Caco-2 (cell line): ENCODE measurements at regions of chr16 and their contacts with region 1.

Region 1: GRCh38 chr16:25111403-25112166 is at the start of gene LCMT1:
- DNase-seq: peak; percentile 93 to 94
- H3K4me3 ChIP-seq: peak within 1 kb of the TSS; percentile 99
- H3K4me3 Mint-ChIP-seq: peak within 1 kb of the TSS; percentile 91
- H3K27ac Mint-ChIP-seq: peak within 1 kb of the TSS; percentile 81
- H3K4me1 ChIP-seq: no peaks in the 10 kb centered on the region
- H3K4me1 Mint-ChIP-seq: peaks cover 7% of the 10 kb centered on the region
- H3K27me3 ChIP-seq: no peaks in the 10 kb centered on the region
- H3K27me3 Mint-ChIP-seq: no peaks in the 10 kb centered on the region
- CTCF ChIP-seq: no peak
- total RNA-seq, gene LCMT1: 50.8 and 53.9 TPM in 2 replicates

Region 2: GRCh38 chr16:24139282-24139681 is 972.3 kb before region 1 on chr16:
- CTCF ChIA-PET with region 1: no interaction called
- POLR2A ChIA-PET with region 1: no interaction called
- intact Hi-C with region 1: no loop called
- DNase-seq: no peak
- H3K4me3 ChIP-seq: no peak overlapping the region
- H3K4me3 Mint-ChIP-seq: no peak overlapping the region
- H3K27ac Mint-ChIP-seq: no peak overlapping the region
- H3K4me1 ChIP-seq: no peaks in the 10 kb centered on the region
- H3K4me1 Mint-ChIP-seq: no peaks in the 10 kb centered on the region
- H3K27me3 ChIP-seq: no peaks in the 10 kb centered on the region
- H3K27me3 Mint-ChIP-seq: peaks cover 8% of the 10 kb centered on the region
- CTCF ChIP-seq: no peak

Region 3: GRCh38 chr16:24834459-24835335 is 276.9 kb before region 1 on chr16:
- CTCF ChIA-PET with region 1: interaction called, 5 read pairs
- POLR2A ChIA-PET with region 1: no interaction called
- intact Hi-C with region 1: loop called (anchors 2 kb)
- DNase-seq: peak; percentile 56 to 58
- H3K4me3 ChIP-seq: no peak overlapping the region
- H3K4me3 Mint-ChIP-seq: no peak overlapping the region
- H3K27ac Mint-ChIP-seq: no peak overlapping the region
- H3K4me1 ChIP-seq: peaks cover 23% of the 10 kb centered on the region
- H3K4me1 Mint-ChIP-seq: peaks cover 7% of the 10 kb centered on the region
- H3K27me3 ChIP-seq: no peaks in the 10 kb centered on the region
- H3K27me3 Mint-ChIP-seq: no peaks in the 10 kb centered on the region
- CTCF ChIP-seq: peak; percentile 47 to 79

Region 4: GRCh38 chr16:24988593-24989338 is 122.8 kb before region 1 on chr16:
- CTCF ChIA-PET with region 1: interaction called, 3 read pairs
- POLR2A ChIA-PET with region 1: no interaction called
- intact Hi-C with region 1: loop called (anchors 5 kb)
- DNase-seq: peak; percentile 87 to 91
- H3K4me3 ChIP-seq: no peak overlapping the region
- H3K4me3 Mint-ChIP-seq: peak overlapping the region; percentile 49
- H3K27ac Mint-ChIP-seq: peak overlapping the region; percentile 86
- H3K4me1 ChIP-seq: peaks cover 67% of the 10 kb centered on the region
- H3K4me1 Mint-ChIP-seq: peaks cover 51% of the 10 kb centered on the region
- H3K27me3 ChIP-seq: no peaks in the 10 kb centered on the region
- H3K27me3 Mint-ChIP-seq: no peaks in the 10 kb centered on the region
- CTCF ChIP-seq: no peak

Region 5: GRCh38 chr16:25014500-25015147 is 97.0 kb before region 1 on chr16:
- CTCF ChIA-PET with region 1: interaction called, 3 read pairs
- POLR2A ChIA-PET with region 1: interaction called, 10 read pairs
- intact Hi-C with region 1: no loop called
- DNase-seq: peak in 1 of 2 experiments; percentile 43
- H3K4me3 ChIP-seq: peak overlapping the region; percentile 96
- H3K4me3 Mint-ChIP-seq: peak overlapping the region; percentile 85
- H3K27ac Mint-ChIP-seq: peak overlapping the region; percentile 86
- H3K4me1 ChIP-seq: peaks cover 39% of the 10 kb centered on the region
- H3K4me1 Mint-ChIP-seq: peaks cover 37% of the 10 kb centered on the region
- H3K27me3 ChIP-seq: no peaks in the 10 kb centered on the region
- H3K27me3 Mint-ChIP-seq: no peaks in the 10 kb centered on the region
- CTCF ChIP-seq: no peak

Region 6: DNA sequence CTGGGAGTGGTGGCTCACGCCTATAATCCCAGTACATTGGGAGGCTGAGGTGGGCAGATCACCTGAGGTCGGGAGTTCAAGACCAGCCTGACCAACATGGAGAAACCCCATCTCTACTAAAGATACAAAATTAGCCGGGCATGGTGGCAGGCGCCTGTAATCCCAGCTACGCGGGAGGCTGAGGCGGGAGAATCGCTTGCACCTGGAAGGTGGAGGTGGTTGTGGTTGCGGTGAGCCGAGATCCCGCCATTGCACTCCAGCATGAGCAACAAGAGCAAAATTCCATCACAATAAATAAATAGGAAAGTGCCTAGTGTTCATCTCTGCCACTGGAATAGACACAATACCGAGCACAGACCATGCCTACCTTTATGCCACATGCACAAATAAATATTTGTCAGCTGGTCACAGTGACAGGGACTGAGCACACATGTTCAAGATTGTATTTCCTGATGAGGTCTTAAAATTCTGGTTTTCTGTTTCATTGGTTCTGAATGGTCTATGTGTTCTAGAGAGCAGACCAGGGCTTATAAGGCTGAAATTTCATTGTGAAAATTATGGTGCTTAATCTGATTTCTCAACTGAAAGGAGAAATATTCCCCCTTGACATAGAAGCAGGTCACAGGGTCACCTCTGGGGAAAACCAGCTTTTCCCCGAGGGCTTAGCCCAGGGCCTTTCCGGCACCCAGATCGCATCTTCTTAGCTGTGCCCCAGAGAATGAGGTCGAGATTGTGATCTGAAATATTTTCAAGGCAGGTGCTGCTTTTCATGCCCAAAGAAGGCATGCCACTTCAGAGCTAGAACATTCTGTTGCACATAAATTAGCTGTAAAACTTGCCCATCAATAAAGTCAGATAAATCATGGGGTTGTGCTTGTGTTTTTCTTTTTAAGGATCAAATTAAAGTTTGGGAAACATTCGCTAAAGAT is 71.3 kb before region 1 on chr16:
- CTCF ChIA-PET with region 1: no interaction called
- POLR2A ChIA-PET with region 1: no interaction called
- intact Hi-C with region 1: no loop called
- DNase-seq: no peak
- H3K4me3 ChIP-seq: no peak overlapping the region
- H3K4me3 Mint-ChIP-seq: no peak overlapping the region
- H3K27ac Mint-ChIP-seq: no peak overlapping the region
- H3K4me1 ChIP-seq: peaks cover 17% of the 10 kb centered on the region
- H3K4me1 Mint-ChIP-seq: peaks cover 29% of the 10 kb centered on the region
- H3K27me3 ChIP-seq: no peaks in the 10 kb centered on the region
- H3K27me3 Mint-ChIP-seq: no peaks in the 10 kb centered on the region
- CTCF ChIP-seq: no peak

Region 7: DNA sequence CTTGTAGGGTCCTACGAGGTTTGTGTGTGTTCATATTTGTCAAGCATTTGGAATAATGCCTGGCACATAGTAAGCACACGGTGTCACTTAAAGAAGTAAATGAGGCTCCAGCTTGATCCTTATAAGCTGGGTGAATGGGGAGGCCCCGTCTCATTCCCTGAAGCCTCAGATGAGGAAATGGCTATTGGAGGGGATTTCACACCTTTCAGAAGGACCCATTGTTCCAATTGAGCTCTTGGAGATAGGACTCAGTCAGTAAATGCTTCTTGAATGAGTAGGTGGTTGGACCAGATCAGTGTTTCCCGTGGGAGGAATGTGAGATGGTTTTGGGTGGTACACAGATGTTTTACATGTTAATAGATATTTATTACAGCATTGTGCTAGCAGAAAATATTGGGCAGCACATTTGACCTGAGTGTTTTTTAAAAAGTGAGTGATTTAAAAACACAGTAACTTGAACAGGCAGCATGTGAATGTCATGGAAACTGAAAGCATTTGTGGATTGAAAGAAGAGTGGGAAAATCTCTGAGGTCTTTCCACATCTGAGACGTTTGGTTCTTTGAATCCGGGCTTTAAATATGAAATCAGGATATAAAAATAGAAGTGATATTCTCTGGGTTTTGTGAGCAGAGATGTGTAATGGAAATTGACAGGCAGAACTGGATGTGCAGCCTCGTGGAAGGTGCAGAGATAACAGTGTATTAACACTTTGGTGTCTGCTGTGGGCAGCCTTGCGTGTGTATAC is 60.0 kb before region 1 on chr16:
- CTCF ChIA-PET with region 1: interaction called, 5 read pairs
- POLR2A ChIA-PET with region 1: interaction called, 5 read pairs
- intact Hi-C with region 1: loop called (anchors 1 kb)
- DNase-seq: no peak
- H3K4me3 ChIP-seq: no peak overlapping the region
- H3K4me3 Mint-ChIP-seq: peak overlapping the region; percentile 52
- H3K27ac Mint-ChIP-seq: peak overlapping the region; percentile 43
- H3K4me1 ChIP-seq: peaks cover 33% of the 10 kb centered on the region
- H3K4me1 Mint-ChIP-seq: peaks cover 20% of the 10 kb centered on the region
- H3K27me3 ChIP-seq: no peaks in the 10 kb centered on the region
- H3K27me3 Mint-ChIP-seq: no peaks in the 10 kb centered on the region
- CTCF ChIP-seq: no peak

Region 8: DNA sequence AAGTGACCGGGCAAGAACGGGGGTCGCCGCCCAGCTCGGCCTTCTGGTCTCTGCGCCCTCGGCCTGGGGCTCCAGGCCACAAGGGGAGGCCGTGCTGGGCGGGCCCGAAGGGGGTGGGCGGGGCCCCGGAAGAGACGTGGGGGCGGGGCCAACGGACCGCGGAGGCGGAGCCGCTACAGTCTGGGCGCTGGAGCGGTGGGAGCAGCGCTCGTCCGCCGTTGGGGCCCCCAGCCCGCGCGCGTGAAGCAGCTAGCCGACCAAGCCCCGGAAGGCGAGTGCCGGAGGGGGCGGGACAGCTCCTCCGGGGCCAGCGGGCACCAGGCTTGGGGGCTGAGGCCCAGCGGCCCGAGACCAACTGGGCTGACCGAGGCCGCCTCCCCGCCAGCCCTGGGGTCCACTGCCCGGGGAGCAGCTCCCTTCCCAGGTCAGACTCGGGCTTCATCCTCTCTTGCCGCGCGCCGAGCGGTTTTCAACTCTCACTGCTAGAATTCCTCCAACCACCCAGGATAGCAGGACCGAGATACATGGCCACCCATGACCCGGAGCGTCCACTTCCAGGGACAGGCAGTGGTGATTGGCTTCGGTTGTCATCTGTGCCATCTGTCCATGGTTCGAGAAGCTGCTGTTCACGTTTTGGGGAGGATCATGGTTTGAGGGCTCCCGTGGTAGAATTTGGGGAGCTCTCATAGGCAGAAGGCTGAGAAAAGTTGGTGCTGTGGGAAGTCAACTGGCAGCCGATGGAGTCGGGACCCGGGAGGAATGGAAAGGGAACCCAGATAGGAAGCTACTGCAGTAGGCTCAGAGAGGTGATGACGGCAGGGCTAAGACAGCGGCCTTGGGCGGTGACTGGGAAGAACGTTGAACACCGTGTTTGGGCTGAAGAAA is 44.6 kb before region 1 on chr16:
- CTCF ChIA-PET with region 1: interaction called, 12 read pairs
- POLR2A ChIA-PET with region 1: interaction called, 13 read pairs
- intact Hi-C with region 1: loop called (anchors 1 kb)
- DNase-seq: peak; percentile 80 to 86
- H3K4me3 ChIP-seq: peak overlapping the region; percentile 54
- H3K4me3 Mint-ChIP-seq: peak overlapping the region; percentile 96
- H3K27ac Mint-ChIP-seq: peak overlapping the region; percentile 91
- H3K4me1 ChIP-seq: peaks cover 24% of the 10 kb centered on the region
- H3K4me1 Mint-ChIP-seq: peaks cover 18% of the 10 kb centered on the region
- H3K27me3 ChIP-seq: no peaks in the 10 kb centered on the region
- H3K27me3 Mint-ChIP-seq: no peaks in the 10 kb centered on the region
- CTCF ChIP-seq: no peak

Region 9: GRCh38 chr16:25089351-25089750 is 22.2 kb before region 1 on chr16:
- CTCF ChIA-PET with region 1: interaction called, 8 read pairs
- POLR2A ChIA-PET with region 1: interaction called, 13 read pairs
- intact Hi-C with region 1: no loop called
- DNase-seq: peak; percentile 74 to 81
- H3K4me3 ChIP-seq: no peak overlapping the region
- H3K4me3 Mint-ChIP-seq: peak overlapping the region; percentile 37
- H3K27ac Mint-ChIP-seq: peak overlapping the region; percentile 62
- H3K4me1 ChIP-seq: peaks cover 10% of the 10 kb centered on the region
- H3K4me1 Mint-ChIP-seq: peaks cover 7% of the 10 kb centered on the region
- H3K27me3 ChIP-seq: no peaks in the 10 kb centered on the region
- H3K27me3 Mint-ChIP-seq: no peaks in the 10 kb centered on the region
- CTCF ChIP-seq: no peak

Region 10: GRCh38 chr16:25100511-25100910 is 11.1 kb before region 1 on chr16:
- CTCF ChIA-PET with region 1: no interaction called
- POLR2A ChIA-PET with region 1: no interaction called
- intact Hi-C with region 1: no loop called
- DNase-seq: no peak
- H3K4me3 ChIP-seq: no peak overlapping the region
- H3K4me3 Mint-ChIP-seq: no peak overlapping the region
- H3K27ac Mint-ChIP-seq: no peak overlapping the region
- H3K4me1 ChIP-seq: 0 out of 2 replicates have a peak, but pooled peaks cover 6% of the 10 kb centered on the region
- H3K4me1 Mint-ChIP-seq: no peaks in the 10 kb centered on the region
- H3K27me3 ChIP-seq: no peaks in the 10 kb centered on the region
- H3K27me3 Mint-ChIP-seq: no peaks in the 10 kb centered on the region
- CTCF ChIP-seq: no peak

Region 11: DNA sequence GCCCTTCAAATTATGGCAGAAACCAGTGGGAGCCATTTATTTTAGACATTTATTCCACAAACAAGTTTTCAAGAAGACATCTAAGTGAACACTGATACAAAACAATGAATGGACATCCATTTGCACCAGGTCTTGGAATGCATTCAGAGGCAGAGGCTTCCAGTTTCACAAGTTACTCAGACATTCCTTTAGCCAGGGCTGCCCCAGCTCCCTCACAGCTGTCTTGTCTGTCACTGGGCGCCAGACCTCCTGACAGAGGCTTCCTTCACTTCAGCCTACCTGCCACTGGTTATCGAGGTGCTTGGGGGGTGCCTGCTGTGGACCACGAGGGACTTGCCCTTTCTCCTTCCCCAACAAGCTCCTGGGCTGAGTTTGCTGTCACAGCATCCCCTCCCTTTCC is 124.4 kb after region 1 on chr16:
- CTCF ChIA-PET with region 1: no interaction called
- POLR2A ChIA-PET with region 1: no interaction called
- intact Hi-C with region 1: no loop called
- DNase-seq: no peak
- H3K4me3 ChIP-seq: no peak overlapping the region
- H3K4me3 Mint-ChIP-seq: no peak overlapping the region
- H3K27ac Mint-ChIP-seq: no peak overlapping the region
- H3K4me1 ChIP-seq: no peaks in the 10 kb centered on the region
- H3K4me1 Mint-ChIP-seq: no peaks in the 10 kb centered on the region
- H3K27me3 ChIP-seq: no peaks in the 10 kb centered on the region
- H3K27me3 Mint-ChIP-seq: peaks cover 2% of the 10 kb centered on the region
- CTCF ChIP-seq: no peak